PC-3 (cell line): ENCODE measurements at regions of chr18 and their contacts with region 1.

Region 1: GRCh38 chr18:73296678-73297077 is 428.9 kb upstream of the NETO1 start:
- DNase-seq: peak; percentile 90
- ATAC-seq: peak; percentile 91
- H3K4me3 ChIP-seq: no peak overlapping the region
- H3K27ac ChIP-seq: peak overlapping the region; percentile 49
- H3K4me1 ChIP-seq: peaks cover 18% of the 10 kb centered on the region
- H3K27me3 ChIP-seq: no peaks in the 10 kb centered on the region
- CTCF ChIP-seq: no peak

Region 2: DNA sequence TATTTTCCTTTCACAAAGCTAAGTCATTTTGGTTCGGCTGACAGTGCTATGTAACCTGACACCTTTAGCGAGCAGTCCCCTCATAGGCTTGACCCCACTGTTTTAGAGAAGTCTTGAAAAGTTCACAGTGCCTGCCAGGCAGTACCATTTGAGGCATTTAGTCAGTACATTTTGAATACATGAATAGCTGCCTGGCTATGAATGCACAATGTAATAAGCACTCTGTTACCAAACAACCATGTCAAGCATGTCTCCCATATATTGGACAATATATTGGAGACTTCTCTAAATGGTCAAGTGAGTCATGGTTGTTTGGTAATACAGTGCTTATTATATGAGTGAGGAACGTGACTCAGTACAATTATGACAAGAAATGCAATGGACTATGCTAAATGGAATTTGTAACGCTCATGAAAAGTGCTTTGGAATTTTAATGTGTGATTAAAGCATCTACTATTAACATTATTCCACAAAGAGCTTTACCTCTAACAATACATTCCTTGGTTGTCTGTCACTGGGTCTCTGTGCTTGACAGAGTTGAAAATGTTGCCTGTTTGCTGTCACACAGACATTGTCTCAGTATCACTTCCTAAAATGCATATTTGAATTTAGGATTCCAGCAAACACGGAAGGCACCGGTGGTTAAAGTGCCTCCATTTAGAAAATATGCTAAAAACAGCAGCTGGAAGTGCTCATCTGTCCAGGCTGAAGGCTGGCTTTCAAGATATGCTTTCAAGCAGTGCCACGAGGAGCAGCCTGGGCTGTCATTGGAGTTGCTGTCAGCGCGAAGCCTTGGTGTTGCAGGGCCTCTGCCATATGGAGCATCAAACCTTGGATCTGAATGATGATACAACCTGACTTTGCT is 392.4 kb after region 1 on chr18:
- CTCF ChIA-PET with region 1: no interaction called
- POLR2A ChIA-PET with region 1: interaction called, 13 read pairs
- intact Hi-C with region 1: no loop called
- DNase-seq: peak; percentile 87
- ATAC-seq: peak; percentile 41
- H3K4me3 ChIP-seq: no peak overlapping the region
- H3K27ac ChIP-seq: peak overlapping the region; percentile 93
- H3K4me1 ChIP-seq: peaks cover 49% of the 10 kb centered on the region
- H3K27me3 ChIP-seq: no peaks in the 10 kb centered on the region
- CTCF ChIP-seq: no peak